BJ (cell line): ENCODE measurements at regions of chr19 and their contacts with region 1.

Region 1: GRCh38 chr19:46661020-46661731 is at the start of gene DACT3:
- DNase-seq: peak; percentile 99
- H3K4me3 ChIP-seq: peak within 1 kb of the TSS; percentile 75
- H3K27me3 ChIP-seq: no peaks in the 10 kb centered on the region
- CTCF ChIP-seq: no peak
- polyA plus RNA-seq, gene DACT3: 6.2 and 7.1 TPM in 2 replicates

Region 2: DNA sequence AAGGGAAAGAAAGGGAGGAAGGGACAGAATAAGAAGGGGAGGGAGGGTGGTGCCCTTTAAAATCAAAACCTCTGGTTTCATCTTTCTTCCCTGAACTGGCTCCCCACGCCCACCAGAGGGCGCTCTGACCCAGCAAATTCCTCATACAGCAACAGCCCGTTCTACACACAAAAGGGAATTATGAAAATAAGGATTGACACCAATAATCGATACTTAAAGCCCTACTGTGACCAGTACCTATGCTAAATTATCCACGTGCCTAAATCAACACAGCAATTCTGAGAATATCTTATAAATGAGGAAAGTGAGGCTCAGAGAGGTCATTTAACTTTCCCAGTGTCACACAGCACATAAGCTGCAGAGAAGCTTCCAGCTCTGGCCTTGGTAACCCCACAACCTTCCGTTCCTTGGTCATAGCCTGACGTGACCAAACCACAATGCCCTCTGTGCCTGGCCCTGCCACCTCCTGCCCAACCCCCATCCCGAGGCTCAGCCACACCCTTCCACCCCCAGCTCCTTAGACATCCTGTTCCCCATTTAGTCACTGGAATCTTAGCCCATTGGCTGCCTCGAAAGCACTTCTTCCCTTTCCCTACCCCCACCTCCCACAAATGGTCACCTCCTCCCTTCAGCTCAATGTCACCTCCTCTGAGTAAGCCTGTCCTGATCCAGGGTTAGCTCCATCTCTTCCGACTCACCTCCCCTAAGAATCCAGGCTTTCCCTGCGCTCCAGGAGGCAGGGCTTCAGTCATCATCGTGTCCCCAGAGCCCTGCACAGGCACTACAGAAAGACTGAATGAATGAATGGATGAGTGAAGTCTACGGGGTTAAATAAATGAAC is 131.3 kb before region 1 on chr19:
- CTCF ChIA-PET with region 1: interaction called, 14 read pairs
- POLR2A ChIA-PET with region 1: no interaction called
- DNase-seq: no peak
- H3K4me3 ChIP-seq: no peak overlapping the region
- H3K27me3 ChIP-seq: no peaks in the 10 kb centered on the region; the same call in 1 of the 2 replicates
- CTCF ChIP-seq: peak; percentile 93

Region 3: DNA sequence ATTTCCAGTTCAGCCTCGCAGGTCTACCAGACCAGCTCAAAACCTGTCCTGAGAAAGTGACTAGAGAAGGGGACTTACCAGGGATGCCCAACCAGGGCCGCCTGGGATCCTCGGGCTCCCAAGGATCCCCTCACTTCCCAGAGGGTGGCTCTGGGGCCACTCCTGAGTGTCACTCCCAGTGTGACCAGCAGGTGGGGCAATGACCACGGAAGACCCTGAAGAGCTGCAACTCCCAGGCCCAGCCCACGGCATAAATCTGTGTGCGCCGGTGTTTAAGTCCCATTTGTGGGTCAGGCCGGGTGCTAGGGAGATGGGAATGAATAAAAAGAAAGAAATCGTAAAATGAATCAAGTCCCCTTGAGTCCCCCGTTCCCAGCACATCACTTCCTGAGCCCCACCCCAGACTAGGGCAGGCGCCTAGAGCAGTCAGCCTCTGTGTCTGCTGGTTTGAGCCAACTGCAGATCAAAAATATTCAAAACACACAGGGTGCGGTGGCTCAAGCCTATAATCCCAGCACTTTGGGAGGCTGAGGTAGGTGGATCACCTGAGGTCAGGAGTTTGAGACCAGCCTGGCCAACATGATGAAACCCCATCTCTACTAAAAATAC is 47.0 kb before region 1 on chr19:
- CTCF ChIA-PET with region 1: interaction called, 347 read pairs
- POLR2A ChIA-PET with region 1: interaction called, 11 read pairs
- DNase-seq: no peak
- H3K4me3 ChIP-seq: no peak overlapping the region
- H3K27me3 ChIP-seq: no peaks in the 10 kb centered on the region
- CTCF ChIP-seq: peak; percentile 92

Region 4: GRCh38 chr19:46634045-46634655 is 27.0 kb before region 1 on chr19:
- CTCF ChIA-PET with region 1: interaction called, 34 read pairs
- POLR2A ChIA-PET with region 1: interaction called, 5 read pairs
- DNase-seq: no peak
- H3K4me3 ChIP-seq: peak overlapping the region; percentile 36
- H3K27me3 ChIP-seq: no peaks in the 10 kb centered on the region
- CTCF ChIP-seq: no peak

Region 5: DNA sequence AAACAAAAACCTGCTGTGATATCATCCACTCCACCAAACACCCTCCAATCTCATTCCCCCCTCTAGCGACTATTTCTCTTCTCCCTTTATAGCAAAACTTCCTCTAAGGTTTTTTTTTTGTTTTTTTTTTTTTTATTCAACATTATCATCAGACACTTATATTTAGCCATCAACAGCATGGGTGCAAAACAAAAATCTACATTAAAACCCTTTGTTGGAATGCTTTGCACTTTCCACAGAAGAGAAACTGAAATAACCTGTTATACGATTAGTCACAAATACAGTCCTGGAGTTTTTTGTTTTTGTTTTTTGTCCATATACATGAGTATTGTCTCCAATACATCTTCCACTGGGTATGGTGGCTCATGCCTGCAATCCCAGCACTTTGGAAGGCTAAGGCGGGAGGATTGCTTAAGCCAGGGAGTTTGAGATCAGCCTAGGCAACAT is 164.4 kb after region 1 on chr19:
- CTCF ChIA-PET with region 1: no interaction called
- POLR2A ChIA-PET with region 1: interaction called, 17 read pairs
- DNase-seq: no peak
- H3K4me3 ChIP-seq: no peak overlapping the region
- H3K27me3 ChIP-seq: no peaks in the 10 kb centered on the region
- CTCF ChIP-seq: no peak